Heart left ventricle (tissue), 16 donors: ENCODE measurements at regions of chr6 and their contacts with region 1.

Region 1: GRCh38 chr6:6730831-6731230 is 142.3 kb downstream of the LY86 start:
- DNase-seq: peak in 3 of 5 donors; percentile 63 to 85 (median 74)
- ATAC-seq: peak; percentile 57 to 89 (median 83)
- H3K4me3 ChIP-seq: no peak overlapping the region
- H3K27ac ChIP-seq: peak overlapping the region in 11 of 12 donors; percentile 16 to 67 (median 50)
- H3K4me1 ChIP-seq: peaks cover 0 to 24% (median 6%) of the 10 kb centered on the region in 12 donors
- H3K27me3 ChIP-seq: no peaks in the 10 kb centered on the region
- CTCF ChIP-seq: no peak
- POLR2A ChIP-seq: no peak

Region 2: GRCh38 chr6:6927521-6928371 is 196.9 kb after region 1 on chr6:
- intact Hi-C with region 1: loop called in 1 of 10 experiments (anchors 5 kb)
- DNase-seq: peak; percentile 45 to 74 (median 48)
- ATAC-seq: peak; percentile 88 to 92 (median 90)
- H3K4me3 ChIP-seq: peak overlapping the region in 10 of 12 donors; percentile 18 to 53 (median 44)
- H3K27ac ChIP-seq: peak overlapping the region in 11 of 12 donors; percentile 61 to 86 (median 75)
- H3K4me1 ChIP-seq: peaks cover 0 to 28% (median 4%) of the 10 kb centered on the region in 12 donors
- H3K27me3 ChIP-seq: no peaks in the 10 kb centered on the region
- CTCF ChIP-seq: peak in 10 of 12 donors; percentile 6 to 43 (median 23)
- POLR2A ChIP-seq: no peak